ENCODE measurements at regions of chr20 and their contacts with region 1.

Region 1: GRCh38 chr20:36135159-36135558 is 19.4 kb upstream of the EPB41L1 start:
- DNase-seq: no peak
- H3K4me3 ChIP-seq: no peak overlapping the region
- H3K27ac ChIP-seq: no peak overlapping the region
- H3K4me1 ChIP-seq: peaks cover 7 to 32% (median 7%) of the 10 kb centered on the region in 3 donors
- H3K27me3 ChIP-seq: no peaks in the 10 kb centered on the region
- CTCF ChIP-seq: no peak
- POLR2A ChIP-seq: no peak

Region 2: GRCh38 chr20:35994994-35995453 is 140.1 kb before region 1 on chr20:
- intact Hi-C with region 1: loop called (anchors 5 kb)
- DNase-seq: peak; percentile 7
- H3K4me3 ChIP-seq: no peak overlapping the region
- H3K27ac ChIP-seq: no peak overlapping the region
- H3K4me1 ChIP-seq: peaks cover 0 to 7% (median 0%) of the 10 kb centered on the region in 3 donors
- H3K27me3 ChIP-seq: no peaks in the 10 kb centered on the region
- CTCF ChIP-seq: peak; percentile 65 to 92 (median 88)
- POLR2A ChIP-seq: no peak

Measured in esophagus squamous epithelium (tissue), 5 donors.